AG04450 (cell line): ENCODE measurements at regions of chr5 and their contacts with region 1.

Region 1: GRCh38 chr5:172697123-172698121 is 56.4 kb downstream of the NEURL1B start:
- DNase-seq: peak; percentile 63
- H3K4me3 ChIP-seq: peak overlapping the region; percentile 72
- H3K27ac ChIP-seq: peak overlapping the region; percentile 21
- H3K27me3 ChIP-seq: peaks cover 24% of the 10 kb centered on the region
- CTCF ChIP-seq: peak; percentile 91

Region 2: GRCh38 chr5:172450861-172451695 is 246.3 kb before region 1 on chr5:
- CTCF ChIA-PET with region 1: interaction called, 23 read pairs
- POLR2A ChIA-PET with region 1: no interaction called
- DNase-seq: no peak
- H3K4me3 ChIP-seq: peak overlapping the region; percentile 21
- H3K27ac ChIP-seq: no peak overlapping the region
- H3K27me3 ChIP-seq: no peaks in the 10 kb centered on the region
- CTCF ChIP-seq: peak; percentile 77

Region 3: DNA sequence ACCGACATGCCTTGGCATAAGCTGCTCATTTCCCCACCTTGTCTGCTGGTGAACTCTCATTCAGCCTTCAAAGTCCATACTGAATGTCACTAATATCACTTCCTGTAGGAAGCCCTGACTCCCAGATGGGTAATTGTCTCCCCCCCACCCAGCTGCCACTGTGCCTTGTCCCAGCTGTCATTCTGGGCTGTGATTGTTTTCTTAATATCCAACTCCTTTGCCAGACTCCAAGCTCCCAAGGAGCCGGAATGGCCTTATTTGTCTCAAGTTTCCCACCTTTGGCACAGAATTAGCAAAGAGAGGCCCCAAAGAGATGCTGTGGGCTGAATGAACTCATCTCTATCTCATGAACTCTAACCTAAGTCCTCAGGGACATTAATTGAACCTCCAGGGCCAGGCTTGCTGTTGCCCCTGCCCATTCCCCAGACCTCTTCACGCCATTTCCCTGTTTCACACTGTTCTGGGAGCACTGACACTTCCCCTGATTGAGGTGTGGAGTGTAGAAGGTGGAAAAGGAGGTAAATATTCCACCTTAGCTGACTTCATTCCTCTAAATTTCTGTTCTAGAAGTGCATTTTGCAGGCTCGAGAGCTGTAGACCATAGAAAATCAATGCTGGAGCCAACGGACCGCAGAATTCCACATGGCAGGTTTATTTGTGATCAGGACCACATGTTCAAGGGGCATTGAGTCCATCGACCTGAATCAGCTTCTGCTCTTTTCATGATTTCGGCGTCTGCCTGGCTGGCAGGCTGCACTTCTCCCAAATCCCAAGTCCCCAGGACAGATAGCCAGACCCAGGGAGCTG is 238.2 kb before region 1 on chr5:
- CTCF ChIA-PET with region 1: interaction called, 24 read pairs
- POLR2A ChIA-PET with region 1: no interaction called
- DNase-seq: no peak
- H3K4me3 ChIP-seq: no peak overlapping the region
- H3K27ac ChIP-seq: no peak overlapping the region
- H3K27me3 ChIP-seq: peaks cover 2% of the 10 kb centered on the region
- CTCF ChIP-seq: no peak

Region 4: DNA sequence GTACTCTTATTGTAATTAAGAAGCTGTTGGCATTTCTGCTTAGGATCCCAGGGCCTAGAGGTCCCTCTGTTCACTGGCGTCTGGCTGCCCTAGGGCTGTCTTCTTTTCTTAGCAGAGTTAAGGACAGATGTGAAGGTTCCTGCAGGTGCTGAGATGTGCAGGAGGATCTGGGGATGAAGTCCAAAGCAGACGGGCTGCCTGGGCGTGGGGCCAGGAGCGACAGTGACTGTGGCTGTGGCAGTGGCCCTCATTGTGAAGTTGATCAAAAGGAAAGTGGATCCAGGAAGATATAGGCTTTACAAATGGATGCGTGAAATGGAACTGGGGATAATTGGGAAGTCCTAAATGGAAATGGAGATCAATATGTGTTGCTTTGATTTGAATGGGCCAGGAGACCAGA is 224.0 kb before region 1 on chr5:
- CTCF ChIA-PET with region 1: interaction called, 135 read pairs
- POLR2A ChIA-PET with region 1: no interaction called
- DNase-seq: no peak
- H3K4me3 ChIP-seq: no peak overlapping the region
- H3K27ac ChIP-seq: no peak overlapping the region
- H3K27me3 ChIP-seq: peaks cover 13% of the 10 kb centered on the region
- CTCF ChIP-seq: no peak

Region 5: DNA sequence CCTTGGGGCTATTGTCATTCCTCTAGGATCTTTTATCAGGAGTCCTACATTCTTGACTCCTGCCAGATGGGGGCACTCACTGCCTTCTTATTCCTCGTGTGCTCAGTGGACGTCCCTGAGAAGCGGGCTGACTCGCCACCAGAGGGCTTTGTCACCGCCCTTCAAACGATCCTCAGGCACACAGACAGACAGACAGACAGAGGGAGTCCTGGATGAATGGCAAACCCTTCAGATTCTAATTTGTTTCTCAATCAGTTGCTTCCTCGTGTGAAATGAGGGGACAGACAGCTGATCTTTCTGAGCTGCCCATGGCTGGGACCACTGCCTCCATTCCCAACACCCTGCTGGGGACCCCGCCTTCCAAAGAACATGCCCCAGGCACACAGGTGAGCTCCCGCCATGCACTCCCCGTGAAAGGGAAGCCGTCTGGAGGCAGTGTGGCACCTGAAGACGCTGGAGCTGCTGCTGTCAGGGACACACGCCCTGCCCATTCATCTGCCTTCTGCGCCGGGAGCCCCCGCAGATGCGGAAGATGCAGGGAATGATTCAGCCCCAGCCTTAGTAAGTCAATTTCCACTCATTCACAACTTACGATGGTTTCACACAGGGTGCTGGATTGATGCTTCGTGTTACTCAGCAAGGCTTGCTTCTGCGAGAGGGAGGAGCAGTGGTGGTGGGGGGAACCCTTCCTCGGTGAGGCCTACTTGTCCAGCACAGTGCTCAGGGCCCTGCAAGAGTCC is 218.2 kb before region 1 on chr5:
- CTCF ChIA-PET with region 1: interaction called, 135 read pairs
- POLR2A ChIA-PET with region 1: no interaction called
- DNase-seq: peak; percentile 61
- H3K4me3 ChIP-seq: no peak overlapping the region
- H3K27ac ChIP-seq: no peak overlapping the region
- H3K27me3 ChIP-seq: peaks cover 7% of the 10 kb centered on the region
- CTCF ChIP-seq: peak; percentile 89

Region 6: GRCh38 chr5:172641359-172642050 is 55.9 kb before region 1 on chr5:
- CTCF ChIA-PET with region 1: interaction called, 10 read pairs
- POLR2A ChIA-PET with region 1: no interaction called
- DNase-seq: no peak
- H3K4me3 ChIP-seq: peak overlapping the region; percentile 65
- H3K27ac ChIP-seq: no peak overlapping the region
- H3K27me3 ChIP-seq: peaks cover 3% of the 10 kb centered on the region
- CTCF ChIP-seq: 0 out of 2 replicates have a peak, but pooled peaks have one; percentile 22

Region 7: DNA sequence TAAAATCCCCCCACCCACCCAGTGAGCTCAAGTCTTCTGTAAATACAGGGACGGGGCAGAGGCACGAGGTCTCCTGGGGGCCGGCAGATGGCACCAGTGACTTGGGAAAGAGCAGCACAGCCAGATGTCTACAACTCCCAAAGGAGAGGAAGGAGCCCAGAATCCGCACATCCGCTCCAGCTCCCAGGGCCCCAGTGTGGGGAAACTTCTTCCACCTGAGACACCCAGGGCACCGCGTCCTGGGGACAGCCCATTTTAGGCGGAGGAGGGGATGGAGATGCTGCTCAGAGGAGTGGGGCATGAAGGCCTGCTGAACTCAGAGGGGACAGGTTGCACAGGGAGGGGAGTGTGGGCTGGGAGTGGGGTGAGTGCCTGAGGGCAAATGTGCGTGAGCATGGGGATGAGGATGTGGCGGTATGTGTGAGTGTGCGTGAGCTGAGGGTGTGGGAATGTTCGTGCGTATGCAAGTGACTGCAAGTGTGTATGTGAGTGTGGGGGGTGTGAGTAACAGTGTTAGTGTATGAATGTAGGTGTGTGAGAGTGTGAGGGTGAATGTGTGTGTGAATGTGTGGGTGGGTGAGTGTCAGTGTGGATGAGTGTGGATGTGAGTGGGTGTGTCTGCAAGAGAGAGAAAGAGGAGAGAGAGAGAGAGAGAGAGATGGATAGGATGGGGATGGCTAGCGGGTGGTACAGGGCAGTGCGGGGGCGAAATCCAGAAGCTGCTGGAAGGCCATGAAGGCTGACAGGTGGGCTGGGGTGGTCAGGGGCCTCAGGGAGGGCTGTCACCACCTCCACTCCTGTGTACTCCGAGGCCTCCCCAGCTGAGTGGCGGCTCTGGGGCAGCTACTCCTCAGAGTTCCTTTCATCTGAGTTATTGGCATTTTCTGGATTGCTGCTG is 10.1 kb after region 1 on chr5:
- CTCF ChIA-PET with region 1: interaction called, 14 read pairs
- POLR2A ChIA-PET with region 1: no interaction called
- DNase-seq: peak; percentile 55
- H3K4me3 ChIP-seq: 0 out of 2 replicates have a peak overlapping the region, but pooled peaks have one; percentile 10
- H3K27ac ChIP-seq: no peak overlapping the region
- H3K27me3 ChIP-seq: peaks cover 12% of the 10 kb centered on the region
- CTCF ChIP-seq: peak; percentile 74